ENCODE measurements at regions of chr18 and their contacts with region 1.

Region 1: DNA sequence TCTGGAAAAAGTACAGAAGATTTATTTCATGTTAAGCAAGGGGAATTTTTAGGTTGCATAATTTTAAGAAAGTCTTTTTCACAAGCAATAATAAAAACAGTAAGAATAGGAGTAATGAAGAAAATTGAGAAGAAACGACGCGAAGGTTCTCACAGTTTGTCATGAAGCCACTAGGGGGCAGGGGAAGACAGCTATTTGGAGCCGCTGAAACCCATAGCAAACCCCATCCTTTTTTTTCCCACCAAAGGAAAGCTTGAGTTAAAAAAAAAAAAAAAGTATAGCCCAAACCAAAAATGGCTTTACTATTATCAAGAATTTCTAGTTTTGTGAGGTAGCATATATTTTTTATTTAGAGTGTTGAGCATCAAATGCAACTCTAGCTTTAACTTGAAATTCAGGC is 300.9 kb downstream of the PHLPP1 start:
- DNase-seq: peak in 4 of 5 donors; percentile 35 to 62 (median 48)
- H3K4me3 ChIP-seq: no peak overlapping the region
- H3K27ac ChIP-seq: no peak overlapping the region
- H3K4me1 ChIP-seq: no peaks in the 10 kb centered on the region
- H3K27me3 ChIP-seq: no peaks in the 10 kb centered on the region
- CTCF ChIP-seq: peak; percentile 56 to 80 (median 57)
- EP300 ChIP-seq: no peak
- POLR2A ChIP-seq: no peak

Region 2: GRCh38 chr18:63444567-63444966 is 428.3 kb after region 1 on chr18:
- intact Hi-C with region 1: loop called (anchors 2 to 10 kb)
- DNase-seq: no peak
- H3K4me3 ChIP-seq: no peak overlapping the region
- H3K27ac ChIP-seq: no peak overlapping the region
- H3K4me1 ChIP-seq: no peaks in the 10 kb centered on the region
- H3K27me3 ChIP-seq: no peaks in the 10 kb centered on the region
- CTCF ChIP-seq: no peak
- EP300 ChIP-seq: no peak
- POLR2A ChIP-seq: no peak

Measured in ovary (tissue), 10 donors.